ENCODE measurements at regions of chr10 and their contacts with region 1.

Region 1: DNA sequence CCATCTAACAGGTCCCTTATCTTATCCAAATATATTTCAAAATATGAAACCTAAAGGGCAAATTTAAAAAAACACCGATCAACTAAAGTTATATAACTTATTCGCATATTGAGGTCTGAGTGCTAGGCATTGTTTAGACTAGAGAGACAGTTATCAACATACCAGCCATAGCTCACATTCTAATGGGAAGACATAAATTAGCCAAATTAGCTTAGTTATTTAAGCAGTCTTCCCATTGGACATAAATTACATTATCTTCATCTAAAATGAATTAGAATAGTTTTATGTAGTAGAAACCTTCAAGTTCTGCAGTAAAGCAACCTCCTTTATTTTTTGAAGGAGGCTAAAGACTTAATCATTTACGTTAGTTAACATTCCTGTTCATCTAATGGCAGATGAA is 17.4 kb downstream of the KIF5B start:
- H3K4me3 Mint-ChIP-seq: no peak overlapping the region
- H3K27ac Mint-ChIP-seq: no peak overlapping the region
- H3K4me1 Mint-ChIP-seq: peaks cover 28% of the 10 kb centered on the region
- H3K27me3 Mint-ChIP-seq: no peaks in the 10 kb centered on the region

Region 2: DNA sequence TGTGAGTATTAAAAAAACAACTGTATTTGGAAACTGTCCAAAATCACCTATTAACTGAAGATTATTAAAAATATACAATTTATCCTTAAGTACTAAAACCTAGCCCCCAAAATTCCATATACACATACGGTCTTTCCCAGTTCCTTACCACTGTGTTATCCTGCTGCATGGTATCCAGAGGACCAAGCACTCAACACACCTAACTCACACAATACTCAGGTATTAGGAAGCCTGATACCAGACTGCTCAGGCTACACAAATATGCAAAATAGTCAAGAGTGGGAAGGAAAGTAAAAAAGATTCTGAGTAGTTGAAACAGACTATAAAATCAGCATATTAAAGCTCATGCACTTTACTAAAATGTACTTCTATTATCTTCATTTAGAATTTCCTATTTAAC is 241.0 kb after region 1 on chr10:
- intact Hi-C with region 1: loop called (anchors 10 kb)
- H3K4me3 Mint-ChIP-seq: no peak overlapping the region
- H3K27ac Mint-ChIP-seq: peak overlapping the region; percentile 62
- H3K4me1 Mint-ChIP-seq: no peaks in the 10 kb centered on the region
- H3K27me3 Mint-ChIP-seq: no peaks in the 10 kb centered on the region

Measured in dendritic cell treated with granulocyte-macrophage colony-stimulating factor and Interleukin-4, amounts not matched to agents 40 ng/mL and 50 ng/mL, for 4 days (primary cell).